ENCODE measurements at regions of chr14 and their contacts with region 1.

Region 1: DNA sequence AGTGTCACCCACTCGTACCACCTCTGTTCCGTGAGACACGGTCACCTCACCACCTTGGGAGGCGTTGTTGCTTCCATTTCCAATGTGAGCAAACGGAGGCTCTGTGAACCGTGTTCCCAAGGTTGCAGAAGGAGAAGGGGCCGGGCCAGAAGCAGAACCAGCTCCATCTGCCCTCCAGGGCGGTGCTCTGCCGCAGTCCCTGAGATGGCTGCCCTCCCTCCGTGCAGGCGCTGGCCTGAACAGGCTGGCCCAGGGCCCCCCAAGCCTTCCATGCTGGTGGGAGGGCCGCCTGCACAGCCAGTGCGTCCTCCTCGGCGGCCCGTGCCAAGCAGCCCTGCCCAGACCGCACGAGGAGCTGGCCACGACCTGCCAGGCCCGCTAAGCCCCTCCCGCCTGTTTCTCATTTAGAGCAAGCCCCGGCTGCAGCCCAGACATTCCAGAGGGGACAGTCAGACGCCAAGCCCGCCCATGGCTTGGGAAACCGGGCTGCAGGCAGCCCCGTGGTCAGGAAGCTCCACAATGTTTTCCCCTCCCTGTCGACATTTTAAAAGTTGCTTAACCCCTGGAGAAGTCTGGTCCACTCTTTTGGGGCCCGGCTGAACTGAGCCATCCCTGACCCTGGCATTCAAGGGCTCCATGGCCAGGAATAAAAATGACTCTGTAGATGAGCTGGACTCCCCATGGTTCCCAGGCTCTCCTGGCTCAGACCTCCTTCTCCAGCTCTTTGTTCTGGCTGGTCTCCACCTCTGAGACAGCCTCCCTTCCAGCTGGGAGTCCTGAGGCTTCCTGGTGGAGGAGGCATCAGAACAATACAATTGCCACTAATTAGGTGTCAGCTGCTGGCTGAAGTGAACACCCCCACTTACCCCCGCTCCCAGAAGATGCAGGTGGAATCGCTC is 236.0 kb downstream of the BCL11B start:
- DNase-seq: peak; percentile 96
- H3K4me3 ChIP-seq: peak overlapping the region in 2 of 3 experiments; percentile 4 to 10
- H3K27ac ChIP-seq: peak overlapping the region; percentile 63
- H3K4me1 ChIP-seq: peaks cover 19% of the 10 kb centered on the region
- H3K27me3 ChIP-seq: no peaks in the 10 kb centered on the region
- CTCF ChIP-seq: no peak

Region 2: GRCh38 chr14:98953551-98954348 is 82.2 kb before region 1 on chr14:
- CTCF ChIA-PET with region 1: no interaction called
- dilution Hi-C with region 1: no loop called
- in situ Hi-C with region 1: no loop called
- intact Hi-C with region 1: loop called (anchors 5 kb)
- DNase-seq: peak; percentile 91
- H3K4me3 ChIP-seq: no peak overlapping the region
- H3K27ac ChIP-seq: no peak overlapping the region
- H3K4me1 ChIP-seq: peaks cover 39% of the 10 kb centered on the region
- H3K27me3 ChIP-seq: no peaks in the 10 kb centered on the region
- CTCF ChIP-seq: no peak

Region 3: GRCh38 chr14:99064226-99064954 is 28.4 kb after region 1 on chr14:
- CTCF ChIA-PET with region 1: no interaction called
- dilution Hi-C with region 1: no loop called
- in situ Hi-C with region 1: no loop called
- intact Hi-C with region 1: loop called (anchors 1 kb)
- DNase-seq: peak; percentile 89
- H3K4me3 ChIP-seq: no peak overlapping the region
- H3K27ac ChIP-seq: peak overlapping the region; percentile 76
- H3K4me1 ChIP-seq: peaks cover 36% of the 10 kb centered on the region
- H3K27me3 ChIP-seq: no peaks in the 10 kb centered on the region
- CTCF ChIP-seq: no peak

Region 4: GRCh38 chr14:99683619-99684355 is 647.8 kb after region 1 on chr14 and contains the start of gene CYP46A1:
- CTCF ChIA-PET with region 1: no interaction called
- dilution Hi-C with region 1: no loop called
- in situ Hi-C with region 1: no loop called
- intact Hi-C with region 1: no loop called
- DNase-seq: peak; percentile 97
- H3K4me3 ChIP-seq: peak within 1 kb of the TSS; percentile 65 to 86 (median 67)
- H3K27ac ChIP-seq: peak within 1 kb of the TSS; percentile 57
- H3K4me1 ChIP-seq: peaks cover 19% of the 10 kb centered on the region
- H3K27me3 ChIP-seq: peaks cover 3% of the 10 kb centered on the region
- CTCF ChIP-seq: no peak
- total RNA-seq, gene CYP46A1: not detected

Measured in mammary epithelial cell (primary cell).